A673 (cell line): ENCODE measurements at regions of chr19 and their contacts with region 1.

Region 1: DNA sequence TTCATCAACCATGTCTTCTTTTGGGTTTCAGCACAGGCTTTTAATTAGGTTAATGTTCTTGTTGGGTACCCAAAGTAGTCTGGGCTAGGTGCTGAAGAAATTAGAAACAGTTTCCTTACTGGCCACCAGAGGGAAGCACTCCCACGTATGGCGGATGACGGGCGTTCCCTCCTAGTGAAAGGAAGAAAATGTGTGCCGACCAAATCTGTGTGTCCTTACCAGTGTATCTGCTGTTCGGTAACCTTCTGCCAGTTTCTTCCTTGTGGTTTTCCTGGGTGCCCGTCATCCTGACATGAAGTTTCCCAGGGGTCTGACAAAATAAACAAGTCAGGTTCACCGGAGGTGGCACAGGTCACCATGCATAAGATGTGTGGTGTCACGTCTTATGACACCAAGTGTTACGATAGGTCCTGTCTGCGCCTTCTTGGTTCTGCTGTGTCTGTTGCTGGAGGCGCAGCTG is 6.0 kb upstream of the WDR88 start:
- DNase-seq: peak; percentile 75
- H3K4me3 ChIP-seq: no peak overlapping the region
- H3K27ac ChIP-seq: no peak overlapping the region
- H3K4me1 ChIP-seq: no peaks in the 10 kb centered on the region
- H3K27me3 ChIP-seq: no peaks in the 10 kb centered on the region
- CTCF ChIP-seq: peak; percentile 85

Region 2: GRCh38 chr19:33226550-33227241 is 100.7 kb after region 1 on chr19:
- CTCF ChIA-PET with region 1: interaction called, 13 read pairs
- POLR2A ChIA-PET with region 1: no interaction called
- intact Hi-C with region 1: no loop called
- DNase-seq: peak; percentile 43
- H3K4me3 ChIP-seq: peak overlapping the region; percentile 10
- H3K27ac ChIP-seq: no peak overlapping the region
- H3K4me1 ChIP-seq: no peaks in the 10 kb centered on the region
- H3K27me3 ChIP-seq: peaks cover 52% of the 10 kb centered on the region
- CTCF ChIP-seq: no peak